Activated B cell treated with CpG ODN at 0.5 μM for 24 hours (primary cell): ENCODE measurements at regions of chr6 and their contacts with region 1.

Region 1: GRCh38 chr6:157597446-157598312 is 216.7 kb downstream of the ZDHHC14 start:
- DNase-seq: no peak
- ATAC-seq: peak; percentile 70
- H3K4me3 Mint-ChIP-seq: peak overlapping the region; percentile 46
- H3K27ac Mint-ChIP-seq: peak overlapping the region; percentile 71
- H3K4me1 Mint-ChIP-seq: peaks cover 54% of the 10 kb centered on the region
- H3K27me3 Mint-ChIP-seq: no peaks in the 10 kb centered on the region
- CTCF ChIP-seq: no peak

Region 2: GRCh38 chr6:157274471-157275226 is 323.0 kb before region 1 on chr6:
- CTCF ChIA-PET with region 1: no interaction called
- POLR2A ChIA-PET with region 1: no interaction called
- intact Hi-C with region 1: no loop called
- DNase-seq: peak; percentile 93
- ATAC-seq: peak; percentile 79
- H3K4me3 Mint-ChIP-seq: peak overlapping the region; percentile 94
- H3K27ac Mint-ChIP-seq: peak overlapping the region; percentile 96
- H3K4me1 Mint-ChIP-seq: peaks cover 9% of the 10 kb centered on the region
- H3K27me3 Mint-ChIP-seq: no peaks in the 10 kb centered on the region
- CTCF ChIP-seq: no peak

Region 3: DNA sequence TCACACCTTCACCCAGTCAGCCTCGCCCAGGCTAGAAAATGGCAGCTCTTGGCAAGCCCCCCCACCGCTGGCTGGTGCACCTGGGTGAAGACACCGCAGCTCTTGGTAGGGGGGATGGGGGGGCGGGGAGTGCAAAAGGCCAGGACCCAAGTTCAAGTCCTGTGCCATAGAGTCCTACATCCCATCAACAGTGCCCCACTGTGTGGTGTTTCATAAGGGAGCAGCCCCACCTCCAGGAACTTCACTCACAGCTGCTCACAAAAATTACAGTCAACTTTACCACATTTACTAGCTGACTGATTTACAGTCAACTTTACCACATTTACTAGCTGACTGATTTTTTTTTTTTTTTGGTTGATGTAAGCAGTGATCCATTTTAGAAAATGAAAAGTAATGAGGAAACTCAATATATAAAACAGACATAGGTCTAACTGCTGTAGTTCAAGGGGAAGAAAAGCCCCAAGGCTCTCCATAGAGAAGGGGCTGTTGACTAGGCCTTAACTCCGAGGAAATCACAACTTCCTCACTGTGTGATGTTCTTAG is 16.4 kb after region 1 on chr6:
- CTCF ChIA-PET with region 1: interaction called, 6 read pairs
- POLR2A ChIA-PET with region 1: interaction called, 3 read pairs
- intact Hi-C with region 1: loop called (anchors 2 kb)
- DNase-seq: no peak
- ATAC-seq: peak; percentile 74
- H3K4me3 Mint-ChIP-seq: peak overlapping the region; percentile 41
- H3K27ac Mint-ChIP-seq: peak overlapping the region; percentile 85
- H3K4me1 Mint-ChIP-seq: peaks cover 67% of the 10 kb centered on the region
- H3K27me3 Mint-ChIP-seq: no peaks in the 10 kb centered on the region
- CTCF ChIP-seq: no peak

Region 4: DNA sequence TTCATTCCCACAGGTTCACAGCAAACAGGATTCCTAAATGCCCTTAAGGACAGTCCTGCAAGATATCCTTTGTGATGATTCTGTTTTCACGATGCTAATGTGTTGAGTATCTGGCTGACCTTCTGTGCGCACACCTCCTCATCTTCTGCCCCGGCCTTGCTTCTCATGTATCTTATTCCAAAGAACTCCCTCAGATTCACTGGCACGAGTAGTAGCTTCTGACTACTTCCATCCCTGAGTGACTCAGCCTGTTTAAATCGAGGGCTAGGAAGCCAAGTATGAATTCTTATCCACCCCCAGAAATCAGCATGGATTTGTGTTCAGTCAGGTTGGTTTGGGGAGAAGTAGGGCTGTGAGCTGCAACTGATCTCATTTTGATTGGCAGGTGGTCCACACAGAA is 35.1 kb after region 1 on chr6:
- CTCF ChIA-PET with region 1: no interaction called
- POLR2A ChIA-PET with region 1: no interaction called
- intact Hi-C with region 1: no loop called
- DNase-seq: no peak
- ATAC-seq: no peak
- H3K4me3 Mint-ChIP-seq: no peak overlapping the region
- H3K27ac Mint-ChIP-seq: no peak overlapping the region
- H3K4me1 Mint-ChIP-seq: peaks cover 16% of the 10 kb centered on the region
- H3K27me3 Mint-ChIP-seq: no peaks in the 10 kb centered on the region
- CTCF ChIP-seq: no peak

Region 5: DNA sequence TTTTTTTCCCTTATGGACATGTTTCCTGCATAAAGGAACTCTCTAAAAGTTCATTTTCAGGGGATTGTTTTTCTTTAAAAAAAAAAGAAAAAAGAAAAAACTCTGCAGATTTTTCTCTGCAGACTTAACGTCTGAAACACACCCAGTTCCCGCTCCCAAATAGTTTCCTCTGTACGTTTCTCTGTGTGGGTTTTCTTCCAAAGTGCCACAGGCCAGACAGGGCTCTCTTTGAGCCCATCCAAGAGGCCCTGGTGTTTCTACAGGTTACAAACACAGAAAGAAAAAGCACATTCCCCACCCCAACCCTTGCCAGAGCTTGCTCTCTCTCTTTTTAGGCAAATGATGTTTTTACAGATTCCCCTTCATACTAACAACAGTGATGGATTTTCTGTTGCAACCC is 1830.1 kb after region 1 on chr6:
- CTCF ChIA-PET with region 1: no interaction called
- POLR2A ChIA-PET with region 1: no interaction called
- intact Hi-C with region 1: no loop called
- DNase-seq: no peak
- ATAC-seq: no peak
- H3K4me3 Mint-ChIP-seq: no peak overlapping the region
- H3K27ac Mint-ChIP-seq: no peak overlapping the region
- H3K4me1 Mint-ChIP-seq: no peaks in the 10 kb centered on the region
- H3K27me3 Mint-ChIP-seq: peaks cover 10% of the 10 kb centered on the region
- CTCF ChIP-seq: no peak